ENCODE measurements at regions of chr9 and their contacts with region 1.

Region 1: DNA sequence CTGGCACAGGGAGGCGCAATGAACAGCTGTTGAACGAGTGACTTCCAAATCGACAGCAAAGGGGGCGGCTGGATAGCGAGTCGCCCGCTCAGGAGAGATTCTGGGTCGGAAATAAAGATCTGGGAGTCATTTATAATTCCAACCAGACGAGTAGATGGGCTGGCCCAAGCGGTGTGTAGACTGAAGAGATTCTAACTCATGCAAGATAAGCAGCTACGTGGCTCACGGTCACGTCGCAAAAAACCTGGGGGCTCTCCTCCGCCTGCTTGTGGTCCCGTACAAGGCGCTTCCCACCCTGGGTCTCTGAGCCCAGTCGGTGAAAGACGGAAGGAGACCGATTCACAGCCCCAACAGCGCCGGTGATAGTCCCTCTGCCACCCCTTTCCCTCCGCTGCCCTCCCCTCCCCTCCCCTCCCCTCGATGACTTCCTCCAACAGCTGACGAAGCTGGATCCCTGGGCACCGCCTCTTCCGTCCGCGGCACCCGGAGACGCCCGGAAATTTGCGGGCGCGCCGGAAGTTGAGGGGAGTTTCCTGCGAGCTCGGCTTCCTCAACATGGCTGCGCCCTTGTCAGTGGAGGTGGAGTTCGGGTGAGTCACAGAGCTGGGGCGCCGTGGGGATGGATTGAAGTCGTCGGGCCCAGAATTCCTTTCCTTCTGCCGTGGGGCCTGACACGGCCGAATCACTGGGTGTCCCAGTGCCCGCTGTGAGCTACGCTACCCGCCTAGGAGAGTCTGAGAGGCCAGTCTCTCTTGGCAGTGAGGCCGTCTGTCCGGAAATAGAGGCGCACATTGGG is at the start of gene URM1:
- DNase-seq: peak; percentile 96
- H3K4me3 Mint-ChIP-seq: peak within 1 kb of the TSS; percentile 96
- H3K27ac Mint-ChIP-seq: peak within 1 kb of the TSS; percentile 94
- H3K4me1 Mint-ChIP-seq: peaks cover 33% of the 10 kb centered on the region
- H3K27me3 Mint-ChIP-seq: no peaks in the 10 kb centered on the region
- total RNA-seq, gene URM1: 81.6 and 82.6 TPM in 2 replicates

Region 2: GRCh38 chr9:128007566-128008138 is 363.4 kb before region 1 on chr9:
- intact Hi-C with region 1: no loop called
- DNase-seq: peak; percentile 68
- H3K4me3 Mint-ChIP-seq: peak overlapping the region; percentile 65
- H3K27ac Mint-ChIP-seq: peak overlapping the region; percentile 93
- H3K4me1 Mint-ChIP-seq: peaks cover 29% of the 10 kb centered on the region
- H3K27me3 Mint-ChIP-seq: peaks cover 3% of the 10 kb centered on the region

Region 3: DNA sequence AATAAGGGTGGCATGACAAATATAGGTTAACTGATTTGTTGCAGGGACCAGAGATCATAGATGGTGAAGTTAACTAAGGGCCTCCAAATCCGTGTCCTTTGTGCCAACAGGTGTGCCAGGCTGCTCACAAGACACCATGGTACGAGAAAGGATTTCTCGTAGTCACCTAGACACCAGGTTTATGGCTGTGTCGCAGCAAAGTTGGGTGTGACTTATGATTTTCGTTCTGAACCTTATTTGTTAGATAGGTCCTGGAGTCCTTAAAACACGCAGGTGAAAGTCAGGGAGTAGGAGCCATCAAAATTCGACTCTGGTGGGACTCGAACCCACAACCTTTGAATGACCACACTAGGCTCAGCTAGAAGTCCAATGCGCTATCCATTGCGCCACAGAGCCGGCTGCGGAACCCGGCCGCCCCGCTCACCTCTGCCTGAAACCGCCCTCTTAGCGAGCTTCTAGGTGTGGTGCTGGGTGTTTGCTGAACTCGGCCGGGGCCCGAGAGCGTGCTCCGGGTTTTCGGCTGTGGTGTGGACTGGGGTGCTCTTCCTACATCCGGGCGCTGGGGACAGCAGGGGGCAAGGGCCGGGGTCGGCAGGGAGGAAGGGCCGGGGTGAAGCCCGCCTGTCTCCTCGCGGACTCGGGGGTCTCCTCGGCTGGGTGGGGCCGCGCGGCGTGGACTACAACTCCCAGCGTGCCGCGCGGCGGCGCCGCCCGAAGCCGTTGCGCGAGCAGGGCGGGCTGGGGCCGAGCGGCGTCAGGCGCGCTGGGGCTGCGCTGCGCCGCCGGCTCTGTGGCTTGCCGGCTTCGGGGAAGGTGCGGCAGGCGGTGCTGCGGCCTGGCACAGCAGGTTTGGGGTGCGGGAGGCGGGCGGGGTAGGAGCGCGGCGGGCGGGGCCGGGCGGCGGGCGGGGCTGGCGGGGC is 31.0 kb before region 1 on chr9 and contains the start of gene SLC27A4:
- intact Hi-C with region 1: loop called (anchors 1 kb)
- DNase-seq: peak; percentile 82
- H3K4me3 Mint-ChIP-seq: peak within 1 kb of the TSS; percentile 94
- H3K27ac Mint-ChIP-seq: peak within 1 kb of the TSS; percentile 88
- H3K4me1 Mint-ChIP-seq: peaks cover 6% of the 10 kb centered on the region
- H3K27me3 Mint-ChIP-seq: no peaks in the 10 kb centered on the region
- total RNA-seq, gene SLC27A4: 41.8 and 43.2 TPM in 2 replicates

Region 4: GRCh38 chr9:128420060-128420650 is 49.1 kb after region 1 on chr9:
- intact Hi-C with region 1: loop called (anchors 1 kb)
- DNase-seq: peak; percentile 65
- H3K4me3 Mint-ChIP-seq: peak overlapping the region; percentile 78
- H3K27ac Mint-ChIP-seq: no peak overlapping the region
- H3K4me1 Mint-ChIP-seq: peaks cover 16% of the 10 kb centered on the region
- H3K27me3 Mint-ChIP-seq: peaks cover 45% of the 10 kb centered on the region

Region 5: DNA sequence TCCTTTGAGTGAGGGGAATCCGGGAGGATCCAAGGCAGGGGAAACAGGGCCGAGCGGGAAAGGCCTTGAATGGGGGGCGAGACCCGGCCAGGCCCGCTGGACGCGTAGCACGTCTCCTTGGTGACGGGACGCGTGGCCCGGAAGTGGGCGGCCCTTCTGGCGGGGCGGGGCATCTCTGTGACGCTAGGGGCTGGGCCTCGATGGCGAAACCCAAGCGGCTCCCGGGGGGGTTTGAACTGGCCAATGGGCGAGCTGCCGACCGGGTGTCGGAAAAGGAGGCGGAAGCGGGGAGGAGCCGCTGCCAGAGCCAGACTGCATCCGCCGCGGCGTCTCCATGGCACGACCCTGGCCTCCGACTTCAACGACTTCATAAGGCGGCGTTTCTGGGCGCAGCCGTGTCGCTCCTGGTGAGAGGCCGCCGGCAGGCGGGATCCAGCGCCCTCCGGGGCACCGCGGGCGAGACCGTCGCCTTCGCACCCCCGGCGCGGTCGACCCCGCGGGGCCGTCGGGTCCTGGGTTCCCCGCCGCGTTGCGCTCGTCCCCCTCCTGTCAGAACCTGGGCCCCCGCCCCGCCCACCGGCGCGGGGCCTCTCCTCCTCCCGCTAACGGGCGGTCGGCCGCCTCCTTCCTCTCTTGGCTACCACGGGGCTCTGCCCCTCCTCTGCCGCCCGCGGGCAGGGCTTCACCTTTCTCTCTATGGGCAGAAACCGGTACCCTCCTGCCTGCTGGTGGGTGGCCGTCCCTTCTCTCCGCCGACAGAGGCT is 85.0 kb after region 1 on chr9 and contains the start of gene ODF2:
- intact Hi-C with region 1: loop called (anchors 1 kb)
- DNase-seq: peak; percentile 98
- H3K4me3 Mint-ChIP-seq: peak within 1 kb of the TSS; percentile 93
- H3K27ac Mint-ChIP-seq: peak within 1 kb of the TSS; percentile 98
- H3K4me1 Mint-ChIP-seq: peaks cover 13% of the 10 kb centered on the region
- H3K27me3 Mint-ChIP-seq: peaks cover 3% of the 10 kb centered on the region
- total RNA-seq, gene ODF2: 55.6 and 57.6 TPM in 2 replicates

Region 6: GRCh38 chr9:128504485-128505413 is 133.7 kb after region 1 on chr9 and contains the start of gene GLE1:
- intact Hi-C with region 1: loop called (anchors 1 kb)
- DNase-seq: peak; percentile 97
- H3K4me3 Mint-ChIP-seq: peak within 1 kb of the TSS; percentile 99
- H3K27ac Mint-ChIP-seq: peak within 1 kb of the TSS; percentile 99
- H3K4me1 Mint-ChIP-seq: peaks cover 23% of the 10 kb centered on the region
- H3K27me3 Mint-ChIP-seq: no peaks in the 10 kb centered on the region
- total RNA-seq, gene GLE1: 51.4 and 52.0 TPM in 2 replicates

Region 7: DNA sequence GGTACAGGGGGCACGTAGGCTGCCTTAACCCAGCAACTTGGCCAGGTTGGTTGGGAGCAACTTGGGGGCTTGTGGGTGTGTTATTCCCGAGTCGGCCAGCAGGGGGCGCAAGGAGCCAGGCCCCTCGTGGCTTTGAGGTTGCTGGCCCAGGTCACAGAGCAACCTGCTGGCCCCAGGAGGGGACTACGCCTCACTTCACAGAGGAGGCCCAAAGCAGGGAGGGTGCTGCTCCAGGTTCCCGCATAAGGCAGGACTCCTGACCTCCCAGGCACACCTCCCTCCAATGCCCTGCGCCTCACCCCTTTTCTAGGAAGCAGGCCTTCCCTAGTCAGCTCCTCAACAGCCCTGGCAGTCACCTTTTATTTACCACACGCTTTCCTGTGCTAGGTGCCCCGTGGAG is 492.6 kb after region 1 on chr9:
- intact Hi-C with region 1: no loop called
- DNase-seq: peak; percentile 77
- H3K4me3 Mint-ChIP-seq: no peak overlapping the region
- H3K27ac Mint-ChIP-seq: no peak overlapping the region
- H3K4me1 Mint-ChIP-seq: peaks cover 6% of the 10 kb centered on the region
- H3K27me3 Mint-ChIP-seq: no peaks in the 10 kb centered on the region

Region 8: GRCh38 chr9:129802851-129803675 is 1432.0 kb after region 1 on chr9 and contains the start of gene TOR1B:
- intact Hi-C with region 1: loop called (anchors 5 kb)
- DNase-seq: peak; percentile 94
- H3K4me3 Mint-ChIP-seq: peak within 1 kb of the TSS; percentile 90
- H3K27ac Mint-ChIP-seq: peak within 1 kb of the TSS; percentile 90
- H3K4me1 Mint-ChIP-seq: peaks cover 31% of the 10 kb centered on the region
- H3K27me3 Mint-ChIP-seq: no peaks in the 10 kb centered on the region
- total RNA-seq, gene TOR1B: 21.9 and 25.6 TPM in 2 replicates

Region 9: GRCh38 chr9:130159915-130160670 is 1789.1 kb after region 1 on chr9:
- intact Hi-C with region 1: no loop called
- DNase-seq: no peak
- H3K4me3 Mint-ChIP-seq: no peak overlapping the region
- H3K27ac Mint-ChIP-seq: no peak overlapping the region
- H3K4me1 Mint-ChIP-seq: no peaks in the 10 kb centered on the region
- H3K27me3 Mint-ChIP-seq: peaks cover 2% of the 10 kb centered on the region

Measured in activated T-helper 1 cell treated with anti-CD3 and anti-CD28 coated beads, Interleukin-12 subunit alpha, Interleukin-12 subunit beta, Interleukin-2, Interleukin-4 antibody, amounts not matched to agents 30 ng/mL and 10 ng/mL and 1 ng/mL, durations not matched to agents 14 hours and 24 hours and 36 hours (primary cell).